ENCODE measurements at regions of chr17 and their contacts with region 1.

Region 1: DNA sequence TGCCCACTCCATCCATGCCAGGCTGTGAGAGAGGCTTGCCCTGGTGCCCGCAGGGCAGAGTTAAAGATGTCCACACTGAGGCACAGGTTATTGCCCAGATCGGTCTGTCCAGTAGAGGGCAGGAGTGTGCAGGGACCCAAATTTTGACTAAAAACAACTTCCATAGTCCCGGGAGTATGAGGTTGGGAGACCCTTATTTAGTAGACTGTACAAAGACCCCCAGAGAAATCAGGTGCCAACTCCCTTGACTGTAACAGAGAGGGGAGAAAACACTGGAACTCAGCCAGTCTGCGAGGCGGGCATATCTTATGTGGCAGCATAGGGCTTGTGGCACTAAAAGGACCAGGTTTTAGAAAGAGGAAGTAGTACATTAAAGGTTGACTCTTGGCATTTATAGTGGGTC is 43.4 kb downstream of the HNF1B start:
- DNase-seq: no peak
- ATAC-seq: no peak
- H3K4me3 ChIP-seq: no peak overlapping the region
- H3K27ac ChIP-seq: no peak overlapping the region
- H3K4me1 ChIP-seq: peaks cover 53% of the 10 kb centered on the region
- H3K27me3 ChIP-seq: no peaks in the 10 kb centered on the region
- CTCF ChIP-seq: peak; percentile 72
- EP300 ChIP-seq: no peak
- POLR2A ChIP-seq: no peak
- RAD21 ChIP-seq: peak; percentile 79

Region 2: GRCh38 chr17:37650419-37651003 is 51.0 kb before region 1 on chr17:
- CTCF ChIA-PET with region 1: interaction called, 6 read pairs
- POLR2A ChIA-PET with region 1: no interaction called
- in situ Hi-C with region 1: loop called (anchors 5 kb)
- intact Hi-C with region 1: loop called (anchors 2 kb)
- DNase-seq: peak; percentile 77
- ATAC-seq: peak; percentile 74
- H3K4me3 ChIP-seq: no peak overlapping the region
- H3K27ac ChIP-seq: no peak overlapping the region
- H3K4me1 ChIP-seq: peaks cover 36% of the 10 kb centered on the region
- H3K27me3 ChIP-seq: no peaks in the 10 kb centered on the region; a peak in 1 of 5 replicates
- CTCF ChIP-seq: peak; percentile 81
- EP300 ChIP-seq: no peak
- POLR2A ChIP-seq: no peak
- RAD21 ChIP-seq: peak; percentile 86

Region 3: GRCh38 chr17:37671824-37672547 is 29.5 kb before region 1 on chr17:
- CTCF ChIA-PET with region 1: no interaction called
- POLR2A ChIA-PET with region 1: interaction called, 27 read pairs
- in situ Hi-C with region 1: no loop called
- intact Hi-C with region 1: loop called (anchors 2 kb)
- DNase-seq: peak; percentile 85
- ATAC-seq: peak; percentile 24; the same call in 2 of the 3 replicates
- H3K4me3 ChIP-seq: no peak overlapping the region
- H3K27ac ChIP-seq: peak overlapping the region; percentile 35
- H3K4me1 ChIP-seq: peaks cover 91% of the 10 kb centered on the region
- H3K27me3 ChIP-seq: no peaks in the 10 kb centered on the region
- CTCF ChIP-seq: no peak
- EP300 ChIP-seq: peak in 1 of 2 experiments; percentile 29; a peak in 2 of 4 replicates
- POLR2A ChIP-seq: no peak
- RAD21 ChIP-seq: no peak

Region 4: GRCh38 chr17:37689317-37689716 is 12.2 kb before region 1 on chr17:
- CTCF ChIA-PET with region 1: no interaction called
- POLR2A ChIA-PET with region 1: interaction called, 20 read pairs
- in situ Hi-C with region 1: no loop called
- intact Hi-C with region 1: no loop called
- DNase-seq: peak; percentile 86
- ATAC-seq: peak; percentile 52
- H3K4me3 ChIP-seq: no peak overlapping the region; a peak in 1 of 6 replicates
- H3K27ac ChIP-seq: peak overlapping the region; percentile 33
- H3K4me1 ChIP-seq: peaks cover 77% of the 10 kb centered on the region
- H3K27me3 ChIP-seq: no peaks in the 10 kb centered on the region
- CTCF ChIP-seq: no peak
- EP300 ChIP-seq: peak in 1 of 2 experiments; percentile 87; a peak in 1 of 4 replicates
- POLR2A ChIP-seq: no peak
- RAD21 ChIP-seq: no peak

Region 5: DNA sequence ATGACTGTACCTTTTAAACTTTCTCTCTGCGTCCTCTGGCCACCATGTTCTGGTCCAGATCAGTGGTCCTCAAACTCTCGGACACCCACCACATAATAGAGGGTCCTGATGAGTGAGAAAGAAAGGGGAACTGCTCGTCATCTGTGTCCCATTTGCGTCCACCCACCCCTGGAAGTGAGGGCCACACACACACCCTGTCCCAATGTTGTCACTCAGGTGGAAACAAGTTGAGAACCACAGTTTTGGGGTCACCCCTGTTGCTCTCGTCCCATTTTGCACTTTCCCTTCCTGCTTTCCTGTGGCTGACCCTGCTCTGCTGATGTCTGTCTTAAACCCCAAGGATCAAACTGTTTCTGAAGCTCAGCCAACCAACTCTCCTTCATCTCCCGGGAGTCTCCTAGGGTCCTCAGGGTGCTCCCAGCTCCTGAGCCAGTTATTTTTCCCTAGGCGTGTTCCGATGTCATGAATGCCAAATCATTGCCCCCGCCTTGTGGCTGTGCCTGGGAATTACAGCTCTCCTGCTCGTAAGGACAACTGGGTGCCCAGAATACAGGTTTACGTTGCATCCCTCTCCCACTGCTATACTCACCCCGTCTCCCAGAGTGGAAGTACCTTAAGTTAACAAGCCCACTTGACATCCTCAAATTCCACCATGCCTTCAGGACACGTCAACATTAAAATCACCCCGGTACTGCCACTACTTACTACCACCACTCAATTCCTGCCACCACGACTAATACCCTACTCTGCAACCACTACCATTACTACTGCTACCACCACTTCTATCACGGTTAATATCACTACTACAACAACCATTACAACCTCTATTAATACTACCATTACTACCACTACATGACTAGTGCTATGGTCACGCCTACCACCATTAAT is 69.4 kb after region 1 on chr17:
- CTCF ChIA-PET with region 1: interaction called, 9 read pairs
- POLR2A ChIA-PET with region 1: interaction called, 6 read pairs
- in situ Hi-C with region 1: no loop called
- intact Hi-C with region 1: loop called (anchors 2 kb)
- DNase-seq: peak; percentile 61
- ATAC-seq: peak; percentile 81
- H3K4me3 ChIP-seq: no peak overlapping the region
- H3K27ac ChIP-seq: no peak overlapping the region
- H3K4me1 ChIP-seq: peaks cover 54% of the 10 kb centered on the region
- H3K27me3 ChIP-seq: peaks cover 0 to 4% of the 10 kb centered on the region in 2 experiments; a peak in 3 of 5 replicates
- CTCF ChIP-seq: peak; percentile 95
- EP300 ChIP-seq: no peak
- POLR2A ChIP-seq: no peak
- RAD21 ChIP-seq: peak; percentile 86

Measured in HepG2 (cell line).